A549 (cell line): ENCODE measurements at regions of chr2 and their contacts with region 1.

Region 1: GRCh38 chr2:9297156-9297555 is 90.5 kb downstream of the ASAP2 start:
- DNase-seq: no peak
- ATAC-seq: no peak
- H3K4me3 ChIP-seq: no peak overlapping the region
- H3K27ac ChIP-seq: no peak overlapping the region
- H3K4me1 ChIP-seq: no peaks in the 10 kb centered on the region
- CTCF ChIP-seq: no peak
- EP300 ChIP-seq: no peak
- POLR2A ChIP-seq: no peak
- RAD21 ChIP-seq: no peak

Region 2: DNA sequence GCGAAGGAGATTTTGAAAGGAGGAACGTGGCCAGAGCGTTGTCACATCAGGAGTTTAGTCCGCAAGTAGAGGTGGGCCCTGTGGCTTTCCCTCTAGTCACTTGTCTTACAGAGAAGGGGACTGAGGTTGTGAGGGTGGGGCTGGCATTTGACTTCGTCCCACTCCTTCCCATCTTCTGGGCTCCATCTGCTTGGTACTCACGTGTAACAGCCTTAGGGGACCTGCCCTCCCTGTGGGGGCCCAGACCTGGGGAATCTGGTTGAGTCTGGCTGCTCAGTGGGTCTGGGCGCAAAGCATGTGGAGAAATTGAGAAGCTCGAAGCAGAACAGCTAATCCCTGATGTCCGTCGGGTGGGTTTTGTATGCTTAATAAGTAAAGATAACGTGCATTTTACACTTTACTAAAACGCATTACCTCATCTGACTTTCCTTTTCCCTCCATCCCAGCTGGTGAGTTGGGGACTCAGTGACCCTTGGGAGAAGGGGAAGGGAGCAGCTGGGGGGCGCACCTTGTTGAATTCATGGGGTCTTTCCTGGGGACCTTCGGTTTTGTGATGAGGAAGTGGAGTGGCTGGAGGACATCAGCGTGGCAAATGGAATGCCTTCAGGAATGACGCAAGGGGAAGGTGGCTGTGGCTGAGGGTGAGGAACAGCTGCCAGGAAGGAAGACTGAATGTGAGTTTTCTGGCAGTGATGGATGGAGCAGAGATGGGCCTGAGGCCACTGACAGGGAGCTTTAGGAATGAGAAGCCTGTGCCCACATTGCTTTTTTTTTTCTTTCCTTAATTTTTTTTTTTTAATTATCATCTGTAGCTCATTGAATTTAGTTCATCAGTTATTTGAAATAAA is 45.8 kb before region 1 on chr2:
- CTCF ChIA-PET with region 1: no interaction called
- POLR2A ChIA-PET with region 1: no interaction called
- DNase-seq: peak; percentile 71 to 81
- ATAC-seq: peak; percentile 74 to 82
- H3K4me3 ChIP-seq: no peak overlapping the region
- H3K27ac ChIP-seq: peak overlapping the region; percentile 67 to 84
- H3K4me1 ChIP-seq: peaks cover 74% of the 10 kb centered on the region
- CTCF ChIP-seq: no peak
- EP300 ChIP-seq: no peak
- POLR2A ChIP-seq: no peak
- RAD21 ChIP-seq: no peak

Region 3: DNA sequence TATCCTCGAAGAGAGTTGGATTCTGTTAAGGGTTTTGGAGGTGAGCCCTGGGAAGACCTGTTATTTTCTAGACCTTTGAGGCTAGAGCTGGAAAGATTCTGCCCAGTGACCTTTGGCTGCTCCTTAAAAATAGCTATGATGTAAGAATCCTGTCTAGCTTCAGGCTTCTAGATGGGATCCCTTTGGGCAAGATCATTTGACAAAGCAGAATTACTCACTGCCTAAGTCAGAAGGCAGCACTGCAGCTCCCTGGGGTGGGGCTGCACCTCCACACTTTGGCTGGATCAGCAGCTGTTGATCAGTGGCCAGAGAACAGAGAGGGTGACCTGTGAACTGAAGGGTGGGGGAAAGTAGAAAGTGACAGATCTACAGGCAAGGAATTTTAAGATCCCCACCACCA is 13.2 kb after region 1 on chr2:
- CTCF ChIA-PET with region 1: interaction called, 14 read pairs
- POLR2A ChIA-PET with region 1: no interaction called
- DNase-seq: peak; percentile 66 to 81
- ATAC-seq: peak; percentile 89 to 91
- H3K4me3 ChIP-seq: no peak overlapping the region
- H3K27ac ChIP-seq: peak overlapping the region; percentile 67 to 86
- H3K4me1 ChIP-seq: peaks cover 55% of the 10 kb centered on the region
- CTCF ChIP-seq: no peak
- EP300 ChIP-seq: peak in 1 of 2 experiments; percentile 20; a peak in 1 of 5 replicates
- POLR2A ChIP-seq: no peak
- RAD21 ChIP-seq: peak in 1 of 2 experiments; percentile 26; a peak in 2 of 5 replicates

Region 4: GRCh38 chr2:9341337-9341887 is 44.3 kb after region 1 on chr2:
- CTCF ChIA-PET with region 1: no interaction called
- POLR2A ChIA-PET with region 1: no interaction called
- DNase-seq: no peak
- ATAC-seq: no peak
- H3K4me3 ChIP-seq: no peak overlapping the region
- H3K27ac ChIP-seq: no peak overlapping the region
- H3K4me1 ChIP-seq: peaks cover 12% of the 10 kb centered on the region
- CTCF ChIP-seq: no peak
- EP300 ChIP-seq: no peak
- POLR2A ChIP-seq: no peak
- RAD21 ChIP-seq: no peak

Region 5: DNA sequence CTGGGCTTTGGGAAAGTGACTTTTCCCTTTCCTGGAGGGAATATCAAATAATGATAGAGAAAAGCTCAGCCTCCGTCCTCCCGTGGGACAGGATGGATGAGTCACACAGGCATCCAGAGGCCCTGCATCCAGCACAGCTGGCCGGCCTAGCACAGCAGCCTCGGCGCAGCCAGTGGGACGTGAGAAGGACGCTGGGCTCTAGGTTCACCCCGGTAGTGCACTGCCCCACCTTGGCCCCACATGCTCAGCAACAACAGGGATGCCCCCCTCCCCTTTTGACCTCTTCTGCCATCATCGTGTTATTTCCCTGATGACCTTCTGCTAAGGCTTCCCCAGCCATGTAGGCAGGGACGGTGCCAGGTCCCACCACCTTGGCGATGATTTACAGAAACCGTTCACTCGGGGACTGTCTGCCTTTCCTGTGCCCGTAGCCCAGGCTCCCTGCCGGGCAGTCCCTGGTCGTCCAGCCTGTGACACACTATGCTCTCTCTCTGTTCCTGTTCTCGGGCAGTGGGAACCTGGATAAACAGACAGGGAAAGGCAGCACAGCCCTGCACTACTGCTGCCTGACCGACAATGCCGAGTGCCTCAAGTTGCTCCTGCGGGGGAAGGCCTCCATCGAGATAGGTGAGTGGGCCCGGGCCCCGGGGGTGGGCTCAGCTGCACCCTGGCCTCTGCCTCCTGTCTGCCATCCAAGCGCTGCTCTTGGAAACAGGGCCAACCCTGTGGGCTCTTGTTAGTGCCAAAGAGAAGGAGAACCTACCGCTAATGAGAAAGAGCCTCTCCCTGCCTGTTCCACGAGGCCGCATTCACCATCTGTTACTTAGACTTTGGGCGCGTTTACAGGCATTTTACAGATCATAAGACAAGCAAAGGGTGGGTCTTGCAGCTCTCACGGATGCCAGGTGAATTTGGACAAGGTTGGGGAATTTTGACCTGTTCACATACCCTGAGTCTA is 81.6 kb after region 1 on chr2:
- CTCF ChIA-PET with region 1: no interaction called
- POLR2A ChIA-PET with region 1: no interaction called
- DNase-seq: peak; percentile 61 to 82
- ATAC-seq: peak; percentile 67 to 73
- H3K4me3 ChIP-seq: no peak overlapping the region
- H3K27ac ChIP-seq: peak overlapping the region; percentile 92 to 96
- H3K4me1 ChIP-seq: peaks cover 55% of the 10 kb centered on the region
- CTCF ChIP-seq: no peak
- EP300 ChIP-seq: no peak
- POLR2A ChIP-seq: no peak
- RAD21 ChIP-seq: no peak; a peak in 1 of 5 replicates